HCT116 (cell line): ENCODE measurements at regions of chr10 and their contacts with region 1.

Region 1: DNA sequence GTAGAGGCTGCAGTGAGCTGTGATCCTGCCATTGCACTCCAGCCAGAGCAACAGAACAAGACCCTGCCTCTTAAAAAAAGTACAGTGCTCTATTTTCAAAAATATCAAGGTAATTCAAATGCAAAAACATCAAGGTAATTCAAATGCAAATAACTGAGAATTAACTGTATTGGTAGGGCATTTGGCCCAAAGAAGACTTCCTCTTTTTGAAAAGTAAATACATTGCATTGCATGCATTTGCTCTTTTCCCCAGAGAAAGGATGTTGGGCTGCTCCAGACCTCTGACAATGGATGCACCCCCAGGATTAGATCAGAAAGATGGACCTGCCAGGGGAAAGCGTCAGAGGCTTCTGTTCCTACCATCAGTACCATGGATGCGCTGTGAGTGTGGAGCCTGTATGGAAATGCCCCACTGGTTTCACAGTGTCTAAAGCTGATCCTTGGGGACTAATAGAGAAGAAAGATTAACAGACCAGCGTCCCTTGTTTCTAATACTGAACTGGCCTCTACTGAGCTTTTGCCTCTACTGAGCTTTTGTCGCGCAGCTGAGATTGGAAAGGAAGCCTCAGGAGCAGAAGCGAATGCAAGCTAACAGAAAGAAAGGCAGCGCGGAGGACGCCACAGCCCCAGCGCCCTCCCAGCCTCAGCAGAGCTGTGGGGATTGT is 93.5 kb upstream of the LYZL2 start:
- DNase-seq: no peak
- ATAC-seq: no peak
- H3K4me3 ChIP-seq: no peak overlapping the region
- H3K27ac ChIP-seq: no peak overlapping the region
- H3K4me1 ChIP-seq: no peaks in the 10 kb centered on the region
- H3K27me3 ChIP-seq: no peaks in the 10 kb centered on the region
- CTCF ChIP-seq: no peak
- POLR2A ChIP-seq: no peak
- RAD21 ChIP-seq: no peak

Region 2: GRCh38 chr10:30736685-30737232 is 13.7 kb after region 1 on chr10:
- CTCF ChIA-PET with region 1: no interaction called
- POLR2A ChIA-PET with region 1: no interaction called
- RAD21 ChIA-PET with region 1: no interaction called
- intact Hi-C with region 1: no loop called
- DNase-seq: peak; percentile 16
- ATAC-seq: peak; percentile 77
- H3K4me3 ChIP-seq: no peak overlapping the region
- H3K27ac ChIP-seq: no peak overlapping the region
- H3K4me1 ChIP-seq: peaks cover 0 to 7% of the 10 kb centered on the region in 2 experiments; a peak in 2 of 4 replicates
- H3K27me3 ChIP-seq: no peaks in the 10 kb centered on the region
- CTCF ChIP-seq: no peak
- POLR2A ChIP-seq: no peak
- RAD21 ChIP-seq: no peak

Region 3: DNA sequence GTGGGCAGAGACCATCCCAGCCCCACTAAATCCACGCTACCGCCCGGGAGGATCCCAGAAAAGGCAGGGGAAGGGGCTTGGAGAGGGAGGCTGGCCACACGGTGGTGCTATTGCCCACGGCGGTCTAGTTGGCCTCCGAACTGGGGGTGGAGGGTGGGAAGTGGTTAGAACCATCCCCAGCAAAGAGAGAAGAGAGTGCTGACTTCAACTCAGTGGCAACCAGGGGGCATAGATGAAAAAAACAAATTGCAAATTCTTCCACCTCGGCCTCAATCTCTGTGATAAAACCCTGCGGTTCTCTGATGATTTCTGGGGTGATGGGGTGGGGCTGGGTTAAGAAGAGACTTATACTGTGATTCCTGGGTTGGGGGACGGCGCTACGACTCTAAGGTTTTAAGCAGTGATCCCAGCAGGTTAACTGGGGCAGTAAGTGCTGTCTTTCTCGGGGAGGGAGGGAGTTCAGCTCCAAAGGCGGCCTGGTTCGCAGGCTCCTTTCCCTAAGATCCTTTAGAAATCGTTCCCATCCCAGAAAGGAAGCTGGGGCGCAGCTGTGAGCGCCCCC is 60.9 kb after region 1 on chr10:
- CTCF ChIA-PET with region 1: no interaction called
- POLR2A ChIA-PET with region 1: no interaction called
- RAD21 ChIA-PET with region 1: no interaction called
- intact Hi-C with region 1: no loop called
- DNase-seq: peak; percentile 19
- ATAC-seq: peak; percentile 88
- H3K4me3 ChIP-seq: no peak overlapping the region
- H3K27ac ChIP-seq: no peak overlapping the region
- H3K4me1 ChIP-seq: no peaks in the 10 kb centered on the region; a peak in 1 of 4 replicates
- H3K27me3 ChIP-seq: peaks cover 2% of the 10 kb centered on the region; the same call in 1 of the 2 replicates
- CTCF ChIP-seq: peak; percentile 59 to 89 (median 83); a peak in 5 of 6 replicates
- POLR2A ChIP-seq: no peak
- RAD21 ChIP-seq: peak; percentile 88

Region 4: DNA sequence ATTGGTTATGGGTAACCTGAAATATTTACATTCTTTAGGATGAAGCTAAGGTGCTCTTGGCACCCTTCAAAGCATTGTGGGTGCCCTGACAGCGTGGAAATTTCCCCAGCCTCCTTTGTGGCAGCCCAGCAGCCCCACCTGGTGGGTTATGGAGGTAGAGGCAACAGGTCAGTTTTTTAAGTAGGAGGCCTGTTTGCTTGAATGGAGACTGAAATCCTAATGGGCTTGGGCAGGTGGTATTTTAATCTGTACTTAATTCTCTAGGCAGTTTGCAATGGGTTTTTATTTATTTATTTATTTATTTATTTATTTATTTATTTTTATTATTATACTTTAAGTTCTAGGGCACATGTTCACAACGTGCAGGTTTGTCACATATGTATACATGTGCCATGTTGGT is 1484.5 kb after region 1 on chr10:
- CTCF ChIA-PET with region 1: no interaction called
- POLR2A ChIA-PET with region 1: no interaction called
- RAD21 ChIA-PET with region 1: no interaction called
- intact Hi-C with region 1: loop called (anchors 10 kb)
- DNase-seq: peak; percentile 35
- ATAC-seq: peak; percentile 71
- H3K4me3 ChIP-seq: no peak overlapping the region
- H3K27ac ChIP-seq: no peak overlapping the region
- H3K4me1 ChIP-seq: peaks cover 3 to 13% of the 10 kb centered on the region in 2 experiments; a peak in 1 of 4 replicates
- H3K27me3 ChIP-seq: no peaks in the 10 kb centered on the region
- CTCF ChIP-seq: peak; percentile 61 to 83 (median 70); a peak in 5 of 6 replicates
- POLR2A ChIP-seq: no peak
- RAD21 ChIP-seq: peak; percentile 85